H1 (cell line): ENCODE measurements at regions of chr16 and their contacts with region 1.

Region 1: DNA sequence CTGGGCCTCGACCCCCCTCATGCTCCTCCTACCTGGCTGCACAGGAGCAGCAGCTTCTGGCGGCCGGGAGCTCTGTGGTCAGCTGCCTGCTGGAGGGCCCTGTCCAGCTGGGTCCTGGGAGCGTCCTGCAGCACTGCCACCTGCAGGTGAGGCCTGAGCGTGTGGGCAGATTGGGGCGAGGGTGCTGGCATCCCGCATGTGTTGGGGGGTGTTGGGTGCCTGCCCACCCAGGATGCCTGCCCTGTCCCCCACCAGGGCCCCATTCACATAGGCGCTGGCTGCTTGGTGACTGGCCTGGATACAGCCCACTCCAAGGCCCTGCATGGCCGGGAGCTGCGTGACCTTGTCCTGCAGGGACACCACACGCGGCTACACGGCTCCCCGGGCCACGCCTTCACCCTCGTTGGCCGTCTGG is 16.5 kb downstream of the FCSK start:
- DNase-seq: peak in 1 of 2 experiments; percentile 74
- H3K4me3 ChIP-seq: no peak overlapping the region
- H3K27ac ChIP-seq: no peak overlapping the region
- H3K4me1 ChIP-seq: no peaks in the 10 kb centered on the region; a peak in 1 of 7 replicates
- H3K27me3 ChIP-seq: no peaks in the 10 kb centered on the region
- CTCF ChIP-seq: peak; percentile 80 to 91 (median 84)
- EP300 ChIP-seq: no peak
- POLR2A ChIP-seq: no peak
- RAD21 ChIP-seq: peak; percentile 69 to 80

Region 2: GRCh38 chr16:70416748-70417616 is 54.0 kb before region 1 on chr16:
- CTCF ChIA-PET with region 1: interaction called, 27 read pairs
- POLR2A ChIA-PET with region 1: no interaction called
- DNase-seq: no peak
- H3K4me3 ChIP-seq: no peak overlapping the region
- H3K27ac ChIP-seq: no peak overlapping the region
- H3K4me1 ChIP-seq: peaks cover 0 to 30% (median 20%) of the 10 kb centered on the region in 4 experiments; a peak in 6 of 7 replicates
- H3K27me3 ChIP-seq: no peaks in the 10 kb centered on the region
- CTCF ChIP-seq: no peak
- EP300 ChIP-seq: no peak
- POLR2A ChIP-seq: no peak
- RAD21 ChIP-seq: no peak

Region 3: DNA sequence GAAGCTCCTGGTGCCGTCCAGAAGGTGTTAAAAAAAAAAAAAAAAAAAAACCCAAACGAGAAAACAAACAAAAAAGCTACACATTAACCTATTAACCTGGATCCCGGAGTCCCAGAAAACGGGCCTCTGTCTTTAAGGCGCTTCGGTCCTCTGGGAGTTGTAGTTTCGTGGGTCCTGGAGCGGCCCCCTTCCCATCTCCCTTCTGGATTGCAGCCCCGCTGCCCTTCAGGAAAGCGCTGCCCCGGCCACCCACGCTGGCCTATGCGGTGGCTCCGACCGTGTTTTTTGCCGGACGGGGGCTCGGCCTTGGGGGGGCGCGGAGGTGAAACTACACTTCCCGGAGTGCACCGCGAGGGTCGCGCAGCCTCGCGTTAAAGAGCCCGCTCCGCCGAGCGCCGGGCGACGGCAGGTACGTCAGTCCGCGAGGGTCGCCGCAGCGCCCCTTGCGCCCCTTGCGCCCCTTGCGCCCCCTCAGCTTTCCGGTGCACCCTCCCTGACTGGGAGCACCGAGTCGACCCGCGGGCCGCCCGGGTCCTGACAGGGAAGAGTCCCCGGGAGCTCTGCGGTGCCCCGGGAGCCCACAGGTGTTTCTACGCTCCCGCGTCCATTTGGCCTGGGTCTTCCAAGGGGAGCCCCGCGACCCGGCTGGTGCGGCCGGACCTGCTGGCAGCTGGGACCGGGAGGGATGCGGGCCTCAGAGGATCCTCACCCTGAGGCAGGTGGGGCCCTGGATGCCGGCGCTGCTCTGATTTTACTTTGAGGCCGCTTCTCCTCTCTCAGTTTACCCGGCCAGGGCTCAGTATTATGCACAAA is 16.5 kb before region 1 on chr16 and contains the start of gene FCSK:
- CTCF ChIA-PET with region 1: interaction called, 36 read pairs
- POLR2A ChIA-PET with region 1: interaction called, 20 read pairs
- DNase-seq: peak in 1 of 2 experiments; percentile 89
- H3K4me3 ChIP-seq: peak within 1 kb of the TSS; percentile 44 to 83 (median 78)
- H3K27ac ChIP-seq: peak within 1 kb of the TSS; percentile 100
- H3K4me1 ChIP-seq: peaks cover 0 to 2% (median 0%) of the 10 kb centered on the region in 4 experiments; a peak in 1 of 7 replicates
- H3K27me3 ChIP-seq: no peaks in the 10 kb centered on the region
- CTCF ChIP-seq: peak; percentile 46 to 62 (median 47); a peak in 3 of 4 replicates
- EP300 ChIP-seq: no peak
- POLR2A ChIP-seq: peak in 1 of 2 experiments; percentile 57; a peak in 2 of 3 replicates
- RAD21 ChIP-seq: peak in 1 of 2 experiments; percentile 36; a peak in 2 of 4 replicates
- total RNA-seq, gene FCSK: 3.4 and 4.6 TPM in 2 replicates

Region 4: DNA sequence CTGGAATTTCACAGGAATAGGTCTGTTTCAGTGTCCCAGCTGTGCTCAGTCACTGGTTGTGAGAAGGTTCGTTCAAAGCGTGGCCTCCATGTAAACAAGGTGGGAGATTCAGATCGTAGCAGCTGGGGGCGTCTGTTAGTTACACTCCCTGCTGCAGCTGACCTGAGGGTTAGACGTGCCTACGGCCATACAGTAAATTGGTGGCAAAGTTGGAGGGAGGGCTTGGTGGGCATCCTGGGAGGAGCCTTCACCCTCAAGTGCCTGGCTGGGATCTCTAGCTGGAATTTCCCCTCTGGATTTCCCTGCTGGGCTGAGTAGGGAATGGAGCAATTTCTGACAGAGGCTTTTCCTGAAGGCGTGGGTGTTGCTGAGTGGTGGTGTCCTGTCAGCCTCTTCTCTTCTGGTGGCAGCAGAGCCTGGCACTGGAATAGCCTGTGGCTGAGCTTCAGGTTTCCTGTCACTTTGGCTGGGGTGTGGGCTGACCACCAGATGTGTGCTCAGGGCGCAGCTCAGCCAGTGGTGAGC is 10.1 kb before region 1 on chr16:
- CTCF ChIA-PET with region 1: interaction called, 36 read pairs
- POLR2A ChIA-PET with region 1: interaction called, 20 read pairs
- DNase-seq: no peak
- H3K4me3 ChIP-seq: no peak overlapping the region
- H3K27ac ChIP-seq: no peak overlapping the region
- H3K4me1 ChIP-seq: peaks cover 0 to 5% (median 1%) of the 10 kb centered on the region in 4 experiments; a peak in 3 of 7 replicates
- H3K27me3 ChIP-seq: no peaks in the 10 kb centered on the region
- CTCF ChIP-seq: no peak
- EP300 ChIP-seq: no peak
- POLR2A ChIP-seq: no peak
- RAD21 ChIP-seq: no peak

Region 5: GRCh38 chr16:70495425-70496182 is 24.7 kb after region 1 on chr16:
- CTCF ChIA-PET with region 1: interaction called, 13 read pairs
- POLR2A ChIA-PET with region 1: no interaction called
- DNase-seq: no peak
- H3K4me3 ChIP-seq: no peak overlapping the region
- H3K27ac ChIP-seq: no peak overlapping the region
- H3K4me1 ChIP-seq: no peaks in the 10 kb centered on the region
- H3K27me3 ChIP-seq: no peaks in the 10 kb centered on the region
- CTCF ChIP-seq: no peak
- EP300 ChIP-seq: no peak
- POLR2A ChIP-seq: no peak
- RAD21 ChIP-seq: no peak

Region 6: GRCh38 chr16:70615945-70616344 is 145.0 kb after region 1 on chr16:
- CTCF ChIA-PET with region 1: no interaction called
- POLR2A ChIA-PET with region 1: no interaction called
- DNase-seq: no peak
- H3K4me3 ChIP-seq: no peak overlapping the region
- H3K27ac ChIP-seq: no peak overlapping the region
- H3K4me1 ChIP-seq: no peaks in the 10 kb centered on the region; a peak in 2 of 7 replicates
- H3K27me3 ChIP-seq: no peaks in the 10 kb centered on the region
- CTCF ChIP-seq: no peak
- EP300 ChIP-seq: no peak
- POLR2A ChIP-seq: no peak
- RAD21 ChIP-seq: no peak